Activated T-helper 1 cell treated with anti-CD3 and anti-CD28 coated beads, Interleukin-12 subunit alpha, Interleukin-12 subunit beta, Interleukin-2, Interleukin-4 antibody, amounts not matched to agents 30 ng/mL and 10 ng/mL and 1 ng/mL, durations not matched to agents 14 hours and 24 hours and 36 hours (primary cell): ENCODE measurements at regions of chr15 and their contacts with region 1.

Region 1: GRCh38 chr15:74373731-74374647 is 6.5 kb upstream of the CYP11A1 start:
- DNase-seq: peak; percentile 90
- H3K4me3 Mint-ChIP-seq: peak overlapping the region; percentile 85
- H3K27ac Mint-ChIP-seq: peak overlapping the region; percentile 78
- H3K4me1 Mint-ChIP-seq: peaks cover 50% of the 10 kb centered on the region
- H3K27me3 Mint-ChIP-seq: peaks cover 26% of the 10 kb centered on the region

Region 2: GRCh38 chr15:74489518-74490338 is 115.7 kb after region 1 on chr15:
- intact Hi-C with region 1: loop called (anchors 1 kb)
- DNase-seq: peak; percentile 63
- H3K4me3 Mint-ChIP-seq: no peak overlapping the region
- H3K27ac Mint-ChIP-seq: peak overlapping the region; percentile 64
- H3K4me1 Mint-ChIP-seq: peaks cover 13% of the 10 kb centered on the region
- H3K27me3 Mint-ChIP-seq: no peaks in the 10 kb centered on the region

Region 3: DNA sequence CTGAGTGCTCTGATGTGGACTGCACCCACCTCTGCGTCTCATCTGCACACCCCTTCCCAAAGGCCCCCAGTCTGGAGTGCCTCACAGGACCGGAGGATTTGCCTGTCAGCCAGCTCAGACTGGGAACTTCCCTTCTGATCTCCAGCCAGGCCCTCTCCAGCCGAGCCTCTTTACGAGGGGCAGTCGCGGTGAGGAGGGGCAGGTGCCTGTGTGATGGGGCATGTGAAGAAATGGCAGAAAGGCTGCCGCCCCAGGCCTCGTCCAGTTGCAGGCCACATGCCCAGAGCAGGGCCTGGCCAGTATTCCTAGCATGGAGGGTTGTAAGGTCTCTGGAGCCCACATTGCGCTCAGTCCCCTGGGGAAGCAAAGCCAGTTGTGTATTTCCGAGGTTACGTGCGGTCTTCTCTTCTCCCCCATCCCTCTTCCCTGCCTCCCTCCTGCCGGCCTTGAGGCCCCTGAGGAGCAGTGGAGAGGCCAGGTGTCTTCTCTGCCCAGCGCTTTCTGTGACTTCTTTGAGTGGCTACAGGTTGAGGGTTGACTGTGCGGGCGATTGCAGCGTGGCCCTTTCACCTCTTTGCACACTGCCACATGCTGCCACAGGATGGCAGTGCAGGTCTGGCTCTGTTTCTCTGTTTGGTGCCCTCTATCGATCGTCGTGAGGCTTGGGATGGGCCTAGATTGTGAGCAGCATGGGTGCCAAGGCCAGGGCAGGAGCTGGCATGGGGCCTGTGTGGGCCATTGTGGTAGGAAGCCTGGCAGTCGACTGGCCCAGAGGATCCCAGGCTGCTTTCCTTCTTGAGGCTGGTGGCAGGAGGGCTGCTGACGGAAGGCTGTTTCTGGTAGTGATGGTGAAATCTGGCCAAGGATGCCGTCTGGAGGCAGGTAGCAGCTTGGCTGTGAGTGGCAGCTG is 246.9 kb after region 1 on chr15:
- intact Hi-C with region 1: loop called (anchors 1 kb)
- DNase-seq: peak; percentile 71
- H3K4me3 Mint-ChIP-seq: no peak overlapping the region
- H3K27ac Mint-ChIP-seq: peak overlapping the region; percentile 77
- H3K4me1 Mint-ChIP-seq: peaks cover 40% of the 10 kb centered on the region
- H3K27me3 Mint-ChIP-seq: no peaks in the 10 kb centered on the region

Region 4: GRCh38 chr15:74768771-74769342 is 394.9 kb after region 1 on chr15:
- intact Hi-C with region 1: loop called (anchors 1 kb)
- DNase-seq: no peak
- H3K4me3 Mint-ChIP-seq: no peak overlapping the region
- H3K27ac Mint-ChIP-seq: no peak overlapping the region
- H3K4me1 Mint-ChIP-seq: peaks cover 34% of the 10 kb centered on the region
- H3K27me3 Mint-ChIP-seq: peaks cover 11% of the 10 kb centered on the region

Region 5: DNA sequence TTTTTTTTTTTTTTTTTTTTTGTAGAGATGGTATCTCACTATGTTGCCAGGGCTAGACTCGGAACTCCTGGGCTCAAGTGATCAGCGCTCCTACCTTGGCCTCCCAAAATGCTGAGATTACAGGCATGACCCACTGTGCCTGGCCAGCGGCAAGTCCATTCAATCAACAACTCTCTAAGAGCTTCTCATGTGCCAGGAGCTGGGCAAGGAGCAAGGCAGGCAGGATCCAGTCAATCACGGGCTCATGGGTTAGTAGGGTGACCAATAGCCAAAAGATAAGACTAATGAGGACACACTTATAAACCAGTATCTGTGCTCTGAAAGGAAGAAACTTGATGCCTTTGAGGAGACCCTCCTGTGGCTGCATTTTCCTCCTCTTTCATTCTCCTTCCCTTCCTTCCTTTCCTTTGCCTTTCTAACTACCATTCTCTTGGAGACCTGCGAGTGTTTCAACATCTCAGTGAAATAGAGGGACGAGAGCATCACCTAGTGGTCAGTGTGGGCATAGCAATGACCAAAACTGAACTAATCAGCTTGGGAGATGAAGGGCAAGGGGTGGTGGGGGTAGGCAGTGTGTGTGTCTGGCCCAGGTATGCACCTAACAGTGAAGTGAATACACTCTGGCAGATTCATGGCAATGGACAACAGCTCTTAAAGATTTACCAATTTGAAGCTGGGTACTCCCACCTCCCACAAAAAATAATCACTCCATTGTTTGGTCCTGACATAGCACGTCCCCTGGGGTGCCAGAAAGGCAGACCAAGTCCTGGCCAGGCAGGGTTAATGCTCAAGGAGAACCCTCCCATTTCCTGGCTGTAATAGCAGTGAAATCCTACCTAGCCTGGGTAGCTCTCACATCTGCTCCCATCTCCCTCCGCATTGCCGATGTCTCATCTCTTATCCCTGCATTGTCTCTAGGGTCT is 576.4 kb after region 1 on chr15:
- intact Hi-C with region 1: loop called (anchors 5 kb)
- DNase-seq: peak; percentile 71
- H3K4me3 Mint-ChIP-seq: no peak overlapping the region
- H3K27ac Mint-ChIP-seq: no peak overlapping the region
- H3K4me1 Mint-ChIP-seq: peaks cover 11% of the 10 kb centered on the region
- H3K27me3 Mint-ChIP-seq: peaks cover 2% of the 10 kb centered on the region